CD8-positive, alpha-beta T cell (primary cell): ENCODE measurements at regions of chr19 and their contacts with region 1.

Region 1: DNA sequence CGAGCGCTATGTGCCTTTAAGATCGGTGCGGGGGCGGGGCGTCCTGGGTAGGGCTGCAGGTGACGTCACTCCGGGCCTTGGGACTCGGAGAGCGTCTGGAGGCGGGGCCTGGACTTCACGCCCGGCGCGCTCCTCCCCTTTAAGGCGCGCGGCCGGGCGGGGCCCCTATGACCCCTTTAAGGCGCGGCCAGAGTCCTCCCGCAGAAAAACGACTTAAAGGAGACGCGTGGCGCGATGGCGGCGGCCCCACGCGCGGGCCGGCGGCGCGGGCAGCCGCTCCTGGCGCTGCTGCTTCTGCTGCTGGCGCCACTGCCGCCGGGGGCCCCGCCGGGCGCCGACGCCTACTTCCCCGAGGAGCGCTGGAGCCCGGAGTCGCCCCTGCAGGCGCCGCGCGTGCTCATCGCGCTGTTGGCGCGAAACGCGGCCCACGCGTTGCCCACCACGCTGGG is at the start of gene COLGALT1:
- DNase-seq: peak; percentile 93 to 99 (median 98)
- ATAC-seq: peak; percentile 100
- H3K4me3 ChIP-seq: peak within 1 kb of the TSS; percentile 80 to 84
- H3K4me3 Mint-ChIP-seq: peak within 1 kb of the TSS; percentile 82
- H3K27ac ChIP-seq: peak within 1 kb of the TSS; percentile 49 to 50
- H3K27ac Mint-ChIP-seq: peak within 1 kb of the TSS; percentile 27
- H3K4me1 ChIP-seq: peaks cover 18% of the 10 kb centered on the region
- H3K4me1 Mint-ChIP-seq: peaks cover 26% of the 10 kb centered on the region
- H3K27me3 ChIP-seq: no peaks in the 10 kb centered on the region
- H3K27me3 Mint-ChIP-seq: no peaks in the 10 kb centered on the region
- CTCF ChIP-seq: no peak
- total RNA-seq, gene COLGALT1: 22.7 to 26.3 TPM

Region 2: GRCh38 chr19:17419621-17420466 is 135.7 kb before region 1 on chr19 and contains the start of gene MVB12A:
- CTCF ChIA-PET with region 1: no interaction called
- POLR2A ChIA-PET with region 1: interaction called, 7 read pairs
- intact Hi-C with region 1: loop called in 1 of 2 experiments (anchors 1 kb)
- DNase-seq: peak; percentile 90 to 100 (median 96)
- ATAC-seq: peak; percentile 98
- H3K4me3 ChIP-seq: peak within 1 kb of the TSS; percentile 69 to 76
- H3K4me3 Mint-ChIP-seq: peak within 1 kb of the TSS; percentile 89
- H3K27ac ChIP-seq: peak within 1 kb of the TSS; percentile 47 to 51
- H3K27ac Mint-ChIP-seq: peak within 1 kb of the TSS; percentile 80
- H3K4me1 ChIP-seq: peaks cover 19% of the 10 kb centered on the region
- H3K4me1 Mint-ChIP-seq: peaks cover 18% of the 10 kb centered on the region
- H3K27me3 ChIP-seq: no peaks in the 10 kb centered on the region
- H3K27me3 Mint-ChIP-seq: no peaks in the 10 kb centered on the region
- CTCF ChIP-seq: no peak
- total RNA-seq, gene MVB12A: 9.1 to 10.4 TPM

Region 3: DNA sequence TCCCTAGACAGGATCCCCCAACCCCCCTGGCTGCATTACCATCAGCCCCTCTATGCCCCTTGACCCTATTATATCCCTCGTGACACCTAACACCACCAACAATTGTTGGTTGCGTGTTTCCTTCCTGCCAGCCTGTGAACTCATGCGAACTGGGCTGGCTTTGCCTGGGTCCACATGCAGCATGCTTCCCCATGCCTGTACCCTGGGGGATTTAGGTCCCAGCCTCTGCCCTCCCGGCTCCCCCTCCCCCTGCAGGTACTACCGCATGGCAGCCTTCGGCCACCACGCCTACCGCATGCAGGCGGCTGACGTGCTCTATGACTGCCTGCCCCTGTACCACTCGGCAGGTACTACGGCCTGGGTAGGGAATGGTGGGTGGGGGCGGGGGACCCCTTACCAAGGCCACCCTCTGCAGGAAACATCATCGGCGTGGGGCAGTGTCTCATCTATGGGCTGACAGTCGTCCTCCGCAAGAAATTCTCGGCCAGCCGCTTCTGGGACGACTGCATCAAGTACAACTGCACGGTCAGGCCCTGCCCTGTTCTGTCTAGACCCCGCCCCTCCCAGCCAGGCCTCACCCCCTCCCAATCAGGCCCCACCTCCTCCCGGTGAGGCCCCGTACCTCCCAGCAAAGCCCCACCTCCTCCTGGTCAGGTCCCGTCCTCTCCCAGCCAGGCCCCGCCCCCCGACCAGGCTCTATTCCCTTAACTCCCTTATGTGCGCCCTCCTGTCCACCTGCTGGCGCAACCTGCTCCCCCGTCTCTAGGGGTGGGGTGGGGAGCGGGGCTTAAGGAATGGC is 66.7 kb before region 1 on chr19:
- CTCF ChIA-PET with region 1: no interaction called
- POLR2A ChIA-PET with region 1: no interaction called
- intact Hi-C with region 1: loop called in 1 of 2 experiments (anchors 5 kb)
- DNase-seq: peak; percentile 54 to 89 (median 80)
- ATAC-seq: peak; percentile 84
- H3K4me3 ChIP-seq: peak overlapping the region; percentile 45 to 50
- H3K4me3 Mint-ChIP-seq: peak overlapping the region; percentile 84
- H3K27ac ChIP-seq: peak overlapping the region; percentile 65 to 83
- H3K27ac Mint-ChIP-seq: peak overlapping the region; percentile 95
- H3K4me1 ChIP-seq: peaks cover 42% of the 10 kb centered on the region
- H3K4me1 Mint-ChIP-seq: peaks cover 48% of the 10 kb centered on the region
- H3K27me3 ChIP-seq: no peaks in the 10 kb centered on the region
- H3K27me3 Mint-ChIP-seq: no peaks in the 10 kb centered on the region
- CTCF ChIP-seq: no peak

Region 4: GRCh38 chr19:17539238-17540117 is 16.0 kb before region 1 on chr19:
- CTCF ChIA-PET with region 1: interaction called, 3 read pairs
- POLR2A ChIA-PET with region 1: no interaction called
- intact Hi-C with region 1: loop called (anchors 1 kb)
- DNase-seq: peak; percentile 83 to 99 (median 96)
- ATAC-seq: peak; percentile 99
- H3K4me3 ChIP-seq: peak overlapping the region; percentile 56 to 63
- H3K4me3 Mint-ChIP-seq: peak overlapping the region; percentile 90
- H3K27ac ChIP-seq: peak overlapping the region; percentile 28 to 37
- H3K27ac Mint-ChIP-seq: peak overlapping the region; percentile 78
- H3K4me1 ChIP-seq: peaks cover 8% of the 10 kb centered on the region
- H3K4me1 Mint-ChIP-seq: peaks cover 11% of the 10 kb centered on the region
- H3K27me3 ChIP-seq: no peaks in the 10 kb centered on the region
- H3K27me3 Mint-ChIP-seq: no peaks in the 10 kb centered on the region
- CTCF ChIP-seq: no peak

Region 5: DNA sequence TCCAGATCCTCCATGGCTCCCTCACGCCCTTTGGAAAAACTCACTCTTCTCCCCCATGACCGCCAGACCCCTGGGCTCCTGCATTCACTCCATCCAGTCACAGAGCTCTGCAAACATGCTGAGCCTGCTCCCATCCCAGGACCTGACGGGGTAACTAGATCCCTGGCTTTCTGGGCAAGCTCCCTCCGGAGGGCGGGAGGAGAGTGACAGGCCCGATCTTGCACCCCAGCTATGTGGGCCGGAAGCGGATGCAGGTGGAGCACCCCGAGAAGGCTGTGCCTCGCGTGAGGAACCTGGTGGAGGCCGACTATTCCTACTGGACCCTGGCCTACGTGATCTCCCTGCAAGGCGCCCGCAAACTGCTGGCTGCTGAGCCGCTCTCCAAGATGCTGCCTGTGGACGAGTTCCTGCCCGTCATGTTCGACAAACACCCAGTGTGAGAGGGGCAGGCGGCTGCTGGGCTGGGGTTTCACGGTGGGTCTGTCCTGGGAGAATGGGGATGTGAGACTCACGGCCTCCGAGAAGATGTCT is 25.0 kb after region 1 on chr19:
- CTCF ChIA-PET with region 1: no interaction called
- POLR2A ChIA-PET with region 1: no interaction called
- intact Hi-C with region 1: no loop called
- DNase-seq: no peak
- ATAC-seq: no peak
- H3K4me3 ChIP-seq: no peak overlapping the region
- H3K4me3 Mint-ChIP-seq: no peak overlapping the region
- H3K27ac ChIP-seq: no peak overlapping the region
- H3K27ac Mint-ChIP-seq: peak overlapping the region; percentile 55
- H3K4me1 ChIP-seq: no peaks in the 10 kb centered on the region
- H3K4me1 Mint-ChIP-seq: no peaks in the 10 kb centered on the region
- H3K27me3 ChIP-seq: no peaks in the 10 kb centered on the region
- H3K27me3 Mint-ChIP-seq: no peaks in the 10 kb centered on the region
- CTCF ChIP-seq: no peak

Region 6: DNA sequence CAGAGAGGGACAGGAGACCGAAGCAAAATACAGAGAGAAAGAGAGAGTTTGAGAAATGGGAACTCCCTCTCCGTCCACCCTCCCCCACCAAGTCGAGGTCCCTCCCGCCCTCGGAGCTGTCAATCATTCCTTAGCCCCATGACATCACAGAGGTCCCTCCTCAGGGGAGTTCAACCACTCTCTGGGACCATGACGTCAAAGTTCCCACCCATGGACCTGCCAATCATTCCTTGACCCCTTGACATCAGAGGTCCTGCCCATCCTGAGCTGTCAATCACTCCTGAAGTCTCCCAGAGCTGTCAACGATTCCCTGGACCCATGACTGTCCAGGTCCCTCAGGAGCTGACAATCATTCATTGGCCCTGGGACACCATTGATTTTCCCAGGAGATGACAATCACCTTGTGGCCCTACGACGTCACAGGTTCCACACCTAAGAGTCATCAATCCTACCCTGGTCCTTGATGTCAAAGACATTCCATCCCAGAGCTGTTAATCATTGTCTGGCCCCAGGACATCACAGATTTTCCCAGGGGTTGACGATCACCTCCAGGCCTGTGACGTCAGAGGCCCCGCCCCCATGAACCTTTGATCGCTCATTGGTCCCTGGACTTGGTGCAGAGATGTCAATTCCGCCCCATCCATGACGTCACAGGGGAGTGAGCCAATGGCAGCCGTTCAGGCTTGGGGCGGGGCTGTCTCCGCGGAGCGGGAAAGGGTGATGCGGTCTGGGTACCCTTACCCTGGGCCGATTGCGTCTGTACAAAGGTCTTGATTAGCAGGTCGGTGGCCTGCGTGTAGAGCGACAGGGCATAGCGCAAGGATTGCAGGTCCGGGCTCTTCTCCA is 61.7 kb after region 1 on chr19:
- CTCF ChIA-PET with region 1: no interaction called
- POLR2A ChIA-PET with region 1: no interaction called
- intact Hi-C with region 1: no loop called
- DNase-seq: peak in 1 of 9 experiments; percentile 28
- ATAC-seq: no peak
- H3K4me3 ChIP-seq: no peak overlapping the region
- H3K4me3 Mint-ChIP-seq: no peak overlapping the region
- H3K27ac ChIP-seq: no peak overlapping the region
- H3K27ac Mint-ChIP-seq: no peak overlapping the region
- H3K4me1 ChIP-seq: no peaks in the 10 kb centered on the region
- H3K4me1 Mint-ChIP-seq: peaks cover 6% of the 10 kb centered on the region
- H3K27me3 ChIP-seq: peaks cover 14 to 19% of the 10 kb centered on the region in 2 experiments
- H3K27me3 Mint-ChIP-seq: peaks cover 31% of the 10 kb centered on the region
- CTCF ChIP-seq: no peak

Region 7: GRCh38 chr19:17718947-17719711 is 163.6 kb after region 1 on chr19 and contains the start of gene MAP1S:
- CTCF ChIA-PET with region 1: no interaction called
- POLR2A ChIA-PET with region 1: no interaction called
- intact Hi-C with region 1: loop called (anchors 1 to 10 kb)
- DNase-seq: peak; percentile 12 to 77 (median 62)
- ATAC-seq: peak; percentile 86
- H3K4me3 ChIP-seq: peak within 1 kb of the TSS; percentile 81
- H3K4me3 Mint-ChIP-seq: peak within 1 kb of the TSS; percentile 87
- H3K27ac ChIP-seq: peak within 1 kb of the TSS in 1 of 2 experiments; percentile 55
- H3K27ac Mint-ChIP-seq: peak within 1 kb of the TSS; percentile 91
- H3K4me1 ChIP-seq: peaks cover 32% of the 10 kb centered on the region
- H3K4me1 Mint-ChIP-seq: peaks cover 32% of the 10 kb centered on the region
- H3K27me3 ChIP-seq: no peaks in the 10 kb centered on the region
- H3K27me3 Mint-ChIP-seq: no peaks in the 10 kb centered on the region
- CTCF ChIP-seq: no peak
- total RNA-seq, gene MAP1S: 28.1 to 29.7 TPM

Region 8: DNA sequence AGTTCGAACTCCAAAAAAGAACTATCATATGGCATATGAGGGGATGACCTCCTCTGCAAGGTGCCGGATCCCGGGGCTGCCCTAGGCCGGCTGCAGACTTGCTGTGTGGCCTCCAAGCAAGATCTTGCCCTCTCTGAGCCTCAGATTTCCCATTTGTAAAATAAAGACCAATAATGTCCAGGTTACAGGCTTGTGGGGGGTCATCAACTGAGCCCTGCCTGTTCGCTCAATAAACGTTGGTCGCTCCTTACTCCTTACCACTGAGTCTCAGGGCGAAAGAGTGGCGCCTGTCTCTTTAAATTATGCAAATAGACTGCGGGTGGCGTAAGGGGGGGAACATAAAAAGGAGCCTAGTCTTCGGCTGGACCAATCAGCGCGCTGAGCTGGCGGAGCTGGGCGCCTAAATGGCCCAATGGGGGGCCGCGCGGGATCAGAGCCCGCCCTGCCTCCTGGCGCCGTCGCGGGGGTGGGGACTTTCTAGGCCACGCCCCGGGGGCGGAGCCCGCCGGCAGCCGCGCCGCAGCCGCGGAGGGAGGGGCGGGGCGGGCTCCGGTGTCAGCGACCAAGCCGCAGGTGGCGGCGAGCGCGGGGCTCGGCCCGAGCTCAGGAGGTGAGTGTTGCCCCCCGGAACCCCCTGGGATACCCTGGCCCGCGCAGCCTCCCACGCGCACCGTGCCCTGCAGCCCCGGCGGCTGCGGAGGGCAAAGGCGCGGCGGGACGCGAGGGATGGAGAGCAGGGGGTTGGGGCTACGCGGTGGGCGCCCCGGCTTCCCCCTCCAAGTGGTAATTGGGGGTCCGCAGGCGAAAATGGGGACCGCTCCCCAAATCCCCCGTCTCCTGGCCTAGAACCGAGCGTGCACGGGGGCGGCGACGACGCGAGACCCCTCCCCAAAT is 191.9 kb after region 1 on chr19:
- CTCF ChIA-PET with region 1: no interaction called
- POLR2A ChIA-PET with region 1: no interaction called
- intact Hi-C with region 1: loop called (anchors 1 kb)
- DNase-seq: peak; percentile 85 to 98 (median 93)
- ATAC-seq: peak; percentile 87
- H3K4me3 ChIP-seq: peak overlapping the region; percentile 57 to 63
- H3K4me3 Mint-ChIP-seq: peak overlapping the region; percentile 89
- H3K27ac ChIP-seq: peak overlapping the region in 1 of 2 experiments; percentile 46
- H3K27ac Mint-ChIP-seq: peak overlapping the region; percentile 45
- H3K4me1 ChIP-seq: peaks cover 50% of the 10 kb centered on the region
- H3K4me1 Mint-ChIP-seq: peaks cover 46% of the 10 kb centered on the region
- H3K27me3 ChIP-seq: no peaks in the 10 kb centered on the region
- H3K27me3 Mint-ChIP-seq: no peaks in the 10 kb centered on the region
- CTCF ChIP-seq: no peak

Region 9: DNA sequence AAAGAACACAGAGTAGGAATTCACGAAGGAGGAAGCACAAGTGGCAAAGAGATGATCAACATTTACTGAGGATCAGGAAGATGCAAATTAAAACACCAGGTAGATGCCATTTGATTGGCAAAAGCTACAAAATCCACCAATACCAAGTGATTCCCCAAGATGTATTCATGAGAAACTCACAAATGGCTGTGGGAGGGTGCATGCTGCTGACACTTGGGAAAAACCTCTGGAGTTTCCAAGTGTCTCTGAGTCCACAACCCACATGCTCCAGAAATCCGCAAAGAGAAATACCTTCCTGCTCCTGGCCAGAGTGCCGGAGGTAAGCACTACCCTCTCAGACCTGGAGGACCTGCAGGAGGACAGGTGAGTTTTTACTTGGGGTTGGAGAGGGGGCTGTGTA is 488.2 kb after region 1 on chr19:
- CTCF ChIA-PET with region 1: no interaction called
- POLR2A ChIA-PET with region 1: no interaction called
- intact Hi-C with region 1: no loop called
- DNase-seq: no peak
- ATAC-seq: no peak
- H3K4me3 ChIP-seq: no peak overlapping the region
- H3K4me3 Mint-ChIP-seq: peak overlapping the region; percentile 55
- H3K27ac ChIP-seq: no peak overlapping the region
- H3K27ac Mint-ChIP-seq: peak overlapping the region; percentile 95
- H3K4me1 ChIP-seq: peaks cover 33% of the 10 kb centered on the region
- H3K4me1 Mint-ChIP-seq: peaks cover 43% of the 10 kb centered on the region
- H3K27me3 ChIP-seq: no peaks in the 10 kb centered on the region
- H3K27me3 Mint-ChIP-seq: no peaks in the 10 kb centered on the region
- CTCF ChIP-seq: no peak